PC-3 (cell line): ENCODE measurements at regions of chr16 and their contacts with region 1.

Region 1: GRCh38 chr16:53773150-53773846 is 69.3 kb downstream of the FTO start:
- DNase-seq: peak; percentile 74
- ATAC-seq: peak; percentile 31; the same call in 1 of the 2 replicates
- H3K4me3 ChIP-seq: no peak overlapping the region
- H3K27ac ChIP-seq: no peak overlapping the region
- H3K4me1 ChIP-seq: peaks cover 62% of the 10 kb centered on the region
- H3K27me3 ChIP-seq: no peaks in the 10 kb centered on the region
- CTCF ChIP-seq: peak; percentile 75

Region 2: GRCh38 chr16:53678756-53679343 is 94.4 kb before region 1 on chr16:
- CTCF ChIA-PET with region 1: no interaction called
- POLR2A ChIA-PET with region 1: no interaction called
- intact Hi-C with region 1: no loop called
- DNase-seq: no peak
- ATAC-seq: peak; percentile 42
- H3K4me3 ChIP-seq: no peak overlapping the region
- H3K27ac ChIP-seq: no peak overlapping the region
- H3K4me1 ChIP-seq: no peaks in the 10 kb centered on the region
- H3K27me3 ChIP-seq: no peaks in the 10 kb centered on the region
- CTCF ChIP-seq: no peak

Region 3: GRCh38 chr16:53756275-53756996 is 16.9 kb before region 1 on chr16:
- CTCF ChIA-PET with region 1: interaction called, 3 read pairs
- POLR2A ChIA-PET with region 1: no interaction called
- intact Hi-C with region 1: loop called (anchors 1 kb)
- DNase-seq: peak; percentile 47
- ATAC-seq: peak; percentile 85
- H3K4me3 ChIP-seq: no peak overlapping the region
- H3K27ac ChIP-seq: peak overlapping the region; percentile 60
- H3K4me1 ChIP-seq: peaks cover 25% of the 10 kb centered on the region
- H3K27me3 ChIP-seq: no peaks in the 10 kb centered on the region
- CTCF ChIP-seq: no peak

Region 4: DNA sequence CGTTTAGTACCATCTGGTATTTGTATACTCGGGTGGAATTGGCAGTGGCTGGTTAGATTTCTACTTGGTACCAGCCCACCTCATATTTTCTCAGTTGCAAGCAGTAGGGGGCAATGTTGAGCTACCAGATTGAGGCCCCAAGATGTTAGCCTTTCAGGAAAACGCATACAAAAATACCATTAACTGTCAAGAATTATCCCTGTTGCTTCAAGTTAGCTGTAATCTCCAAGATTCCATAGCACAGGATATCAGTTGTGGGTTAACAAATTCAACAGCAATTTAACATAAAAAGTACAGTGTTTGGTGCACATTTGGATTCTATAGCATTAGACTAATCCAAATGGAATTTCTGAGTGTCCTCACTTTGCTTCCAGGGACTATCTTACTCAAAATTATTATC is 118.9 kb after region 1 on chr16:
- CTCF ChIA-PET with region 1: interaction called, 4 read pairs
- POLR2A ChIA-PET with region 1: no interaction called
- intact Hi-C with region 1: loop called (anchors 1 kb)
- DNase-seq: peak; percentile 50
- ATAC-seq: peak; percentile 44
- H3K4me3 ChIP-seq: no peak overlapping the region
- H3K27ac ChIP-seq: no peak overlapping the region
- H3K4me1 ChIP-seq: peaks cover 23% of the 10 kb centered on the region
- H3K27me3 ChIP-seq: no peaks in the 10 kb centered on the region
- CTCF ChIP-seq: peak; percentile 77

Region 5: DNA sequence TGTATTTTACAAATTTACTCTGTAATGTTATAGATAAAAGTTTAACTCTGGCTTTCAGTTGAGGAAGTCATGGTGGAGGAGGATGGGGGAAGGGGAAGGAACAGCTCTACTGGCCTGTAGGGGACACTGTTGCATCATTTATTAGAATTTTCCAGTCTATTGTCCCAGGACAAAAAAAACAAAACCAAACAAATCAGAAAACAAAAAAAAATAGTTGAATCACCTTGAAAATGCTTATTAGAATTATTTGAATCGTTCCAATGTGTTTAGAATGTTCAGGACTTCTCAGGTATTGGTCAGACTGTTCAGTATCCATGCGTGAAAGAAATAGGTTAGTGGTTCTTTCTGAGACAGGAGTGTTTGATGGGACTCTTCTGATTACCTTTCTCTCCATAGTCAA is 172.7 kb after region 1 on chr16:
- CTCF ChIA-PET with region 1: no interaction called
- POLR2A ChIA-PET with region 1: no interaction called
- intact Hi-C with region 1: loop called (anchors 1 kb)
- DNase-seq: peak; percentile 55
- ATAC-seq: no peak
- H3K4me3 ChIP-seq: no peak overlapping the region
- H3K27ac ChIP-seq: no peak overlapping the region
- H3K4me1 ChIP-seq: peaks cover 4% of the 10 kb centered on the region; the same call in 1 of the 2 replicates
- H3K27me3 ChIP-seq: no peaks in the 10 kb centered on the region
- CTCF ChIP-seq: peak; percentile 84

Region 6: GRCh38 chr16:54034684-54035083 is 261.4 kb after region 1 on chr16:
- CTCF ChIA-PET with region 1: no interaction called
- POLR2A ChIA-PET with region 1: no interaction called
- intact Hi-C with region 1: no loop called
- DNase-seq: no peak
- ATAC-seq: no peak
- H3K4me3 ChIP-seq: no peak overlapping the region
- H3K27ac ChIP-seq: no peak overlapping the region
- H3K4me1 ChIP-seq: no peaks in the 10 kb centered on the region
- H3K27me3 ChIP-seq: no peaks in the 10 kb centered on the region
- CTCF ChIP-seq: no peak

Region 7: GRCh38 chr16:54080524-54081008 is 307.3 kb after region 1 on chr16:
- CTCF ChIA-PET with region 1: no interaction called
- POLR2A ChIA-PET with region 1: interaction called, 3 read pairs
- intact Hi-C with region 1: loop called (anchors 10 kb)
- DNase-seq: peak; percentile 94
- ATAC-seq: peak; percentile 92
- H3K4me3 ChIP-seq: no peak overlapping the region
- H3K27ac ChIP-seq: peak overlapping the region; percentile 98
- H3K4me1 ChIP-seq: peaks cover 35% of the 10 kb centered on the region
- H3K27me3 ChIP-seq: no peaks in the 10 kb centered on the region
- CTCF ChIP-seq: no peak

Region 8: GRCh38 chr16:54282202-54282927 is 509.1 kb after region 1 on chr16:
- CTCF ChIA-PET with region 1: no interaction called
- POLR2A ChIA-PET with region 1: no interaction called
- intact Hi-C with region 1: loop called (anchors 5 kb)
- DNase-seq: peak; percentile 4
- ATAC-seq: no peak
- H3K4me3 ChIP-seq: no peak overlapping the region
- H3K27ac ChIP-seq: no peak overlapping the region
- H3K4me1 ChIP-seq: no peaks in the 10 kb centered on the region
- H3K27me3 ChIP-seq: peaks cover 43% of the 10 kb centered on the region
- CTCF ChIP-seq: no peak; the same call in 1 of the 2 replicates

Region 9: GRCh38 chr16:55465077-55465896 is 1692.0 kb after region 1 on chr16:
- CTCF ChIA-PET with region 1: no interaction called
- POLR2A ChIA-PET with region 1: no interaction called
- intact Hi-C with region 1: loop called (anchors 10 kb)
- DNase-seq: peak; percentile 86
- ATAC-seq: peak; percentile 93
- H3K4me3 ChIP-seq: no peak overlapping the region
- H3K27ac ChIP-seq: no peak overlapping the region
- H3K4me1 ChIP-seq: peaks cover 1% of the 10 kb centered on the region; the same call in 1 of the 2 replicates
- H3K27me3 ChIP-seq: no peaks in the 10 kb centered on the region
- CTCF ChIP-seq: peak; percentile 98